Left cardiac atrium (tissue), 4 donors: ENCODE measurements at regions of chr11 and their contacts with region 1.

Region 1: DNA sequence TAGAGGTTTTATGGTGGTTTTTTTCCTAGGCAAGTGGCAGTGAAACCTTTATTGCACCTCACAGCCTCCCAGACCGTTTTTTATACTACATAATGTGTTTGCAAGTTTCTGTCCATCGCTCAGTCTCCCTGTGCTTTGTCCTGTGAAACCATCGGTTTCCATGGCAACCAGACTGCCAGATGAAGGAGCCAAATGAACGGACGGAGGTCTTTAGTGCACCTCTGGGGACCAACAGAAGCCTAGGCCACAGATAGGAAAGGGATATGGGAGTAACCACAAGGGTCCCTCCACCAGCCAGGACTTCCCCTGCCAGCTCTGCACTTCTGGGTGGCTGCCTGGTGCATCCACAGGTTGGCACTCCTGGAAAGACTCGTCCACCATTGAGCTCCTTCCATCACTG is 165.0 kb downstream of the CHST1 start:
- DNase-seq: no peak
- ATAC-seq: no peak

Region 2: DNA sequence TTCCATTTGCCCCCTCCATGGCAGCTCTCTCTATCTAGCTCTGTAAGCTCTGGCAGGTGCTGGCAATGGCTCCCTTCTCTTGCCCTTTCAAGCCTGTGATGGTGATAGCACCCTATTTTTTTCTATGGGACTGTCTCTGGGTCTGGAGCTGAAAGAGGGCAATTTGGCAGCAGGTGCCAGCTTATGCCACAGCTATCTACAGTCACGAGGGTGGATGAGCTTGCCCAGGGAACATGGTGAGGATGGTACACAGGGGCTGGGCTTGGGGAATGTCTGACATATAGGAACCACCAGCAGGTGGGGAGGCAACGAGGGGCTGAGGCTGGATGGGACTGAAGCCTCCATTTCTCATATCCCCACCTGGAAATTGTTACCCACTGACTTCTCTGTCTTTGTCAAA is 38.9 kb before region 1 on chr11:
- intact Hi-C with region 1: loop called in 1 of 2 experiments (anchors 2 kb)
- DNase-seq: no peak
- ATAC-seq: no peak